ENCODE measurements at regions of chr3 and their contacts with region 1.

Region 1: GRCh38 chr3:50611464-50612233 is at the start of gene CISH:
- DNase-seq: peak; percentile 99
- ATAC-seq: peak; percentile 68
- H3K4me3 Mint-ChIP-seq: peak within 1 kb of the TSS; percentile 96
- H3K27ac Mint-ChIP-seq: peak within 1 kb of the TSS; percentile 100
- H3K4me1 Mint-ChIP-seq: peaks cover 39% of the 10 kb centered on the region
- H3K27me3 Mint-ChIP-seq: no peaks in the 10 kb centered on the region
- total RNA-seq, gene CISH: 265 to 269 TPM

Region 2: DNA sequence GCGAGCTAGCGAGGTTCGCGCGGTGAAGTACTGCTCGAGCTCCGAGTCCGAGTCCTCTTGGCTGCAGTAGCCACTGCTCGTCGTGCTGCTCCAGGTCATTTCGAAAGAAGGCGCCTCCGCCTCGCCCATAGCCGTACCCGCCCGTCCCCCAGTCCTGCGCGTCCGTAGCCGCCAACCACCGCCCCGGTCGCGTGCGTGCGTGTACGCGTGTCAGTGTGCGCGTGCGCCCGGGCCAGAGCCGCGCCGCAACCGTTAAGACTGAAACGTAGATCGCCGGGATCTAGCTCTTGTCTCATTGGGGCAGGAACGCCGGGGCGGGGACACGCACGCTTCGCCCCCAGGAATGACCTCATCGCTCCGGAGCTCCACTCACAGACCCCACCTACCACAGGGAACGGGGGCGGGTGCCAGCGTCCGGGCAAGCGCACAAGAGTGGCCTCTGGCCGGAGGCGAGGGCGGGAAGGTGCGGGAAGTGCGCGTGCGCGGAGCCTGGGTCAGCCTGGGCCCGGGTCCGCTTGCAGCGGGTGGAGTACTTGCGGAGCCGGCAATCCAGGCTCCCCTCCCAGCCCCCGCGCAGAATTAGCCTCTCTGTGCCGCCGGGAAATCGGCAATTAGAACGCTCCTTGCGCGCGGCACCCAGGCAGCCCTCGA is 274.3 kb before region 1 on chr3:
- CTCF ChIA-PET with region 1: interaction called, 4 read pairs
- POLR2A ChIA-PET with region 1: interaction called, 4 read pairs
- intact Hi-C with region 1: loop called (anchors 1 to 5 kb)
- DNase-seq: peak; percentile 99
- ATAC-seq: peak; percentile 82
- H3K4me3 Mint-ChIP-seq: peak overlapping the region; percentile 83
- H3K27ac Mint-ChIP-seq: peak overlapping the region; percentile 91
- H3K4me1 Mint-ChIP-seq: peaks cover 50% of the 10 kb centered on the region
- H3K27me3 Mint-ChIP-seq: no peaks in the 10 kb centered on the region

Region 3: DNA sequence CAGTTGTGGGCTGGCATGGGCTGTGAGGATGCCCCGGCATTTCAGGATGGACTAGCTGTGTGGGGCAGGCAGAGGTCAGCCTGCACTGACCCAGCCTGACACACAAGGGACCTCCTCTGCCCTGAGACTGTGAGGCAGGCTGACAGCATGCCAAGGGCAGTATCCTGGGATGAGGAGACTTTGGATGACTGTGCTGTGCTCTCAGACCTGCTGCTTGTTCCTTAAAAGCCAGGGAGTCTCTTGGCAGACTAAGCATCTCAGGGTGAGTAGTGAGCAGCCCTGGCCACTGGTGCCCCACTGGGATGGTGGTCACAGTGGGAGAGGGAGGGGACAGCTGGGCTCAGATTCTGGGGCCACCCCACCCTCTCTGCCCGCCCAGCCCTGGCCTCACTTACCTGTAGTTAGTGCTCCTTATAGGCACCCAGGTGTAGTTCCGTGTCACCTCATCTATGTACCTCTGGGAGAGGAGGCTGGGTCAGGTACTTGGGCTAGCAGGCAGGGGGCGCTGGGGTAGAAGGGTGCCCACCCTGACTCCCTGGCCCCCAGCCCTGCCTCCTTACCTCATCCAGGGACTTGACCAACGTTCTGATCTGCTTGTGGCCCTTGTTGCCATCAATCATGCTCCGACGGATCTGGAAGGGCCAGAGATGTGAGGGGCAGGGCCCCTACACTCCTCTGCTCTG is 236.3 kb before region 1 on chr3:
- CTCF ChIA-PET with region 1: no interaction called
- POLR2A ChIA-PET with region 1: no interaction called
- intact Hi-C with region 1: no loop called
- DNase-seq: no peak
- ATAC-seq: peak; percentile 26
- H3K4me3 Mint-ChIP-seq: no peak overlapping the region
- H3K27ac Mint-ChIP-seq: no peak overlapping the region
- H3K4me1 Mint-ChIP-seq: peaks cover 8% of the 10 kb centered on the region
- H3K27me3 Mint-ChIP-seq: no peaks in the 10 kb centered on the region

Region 4: DNA sequence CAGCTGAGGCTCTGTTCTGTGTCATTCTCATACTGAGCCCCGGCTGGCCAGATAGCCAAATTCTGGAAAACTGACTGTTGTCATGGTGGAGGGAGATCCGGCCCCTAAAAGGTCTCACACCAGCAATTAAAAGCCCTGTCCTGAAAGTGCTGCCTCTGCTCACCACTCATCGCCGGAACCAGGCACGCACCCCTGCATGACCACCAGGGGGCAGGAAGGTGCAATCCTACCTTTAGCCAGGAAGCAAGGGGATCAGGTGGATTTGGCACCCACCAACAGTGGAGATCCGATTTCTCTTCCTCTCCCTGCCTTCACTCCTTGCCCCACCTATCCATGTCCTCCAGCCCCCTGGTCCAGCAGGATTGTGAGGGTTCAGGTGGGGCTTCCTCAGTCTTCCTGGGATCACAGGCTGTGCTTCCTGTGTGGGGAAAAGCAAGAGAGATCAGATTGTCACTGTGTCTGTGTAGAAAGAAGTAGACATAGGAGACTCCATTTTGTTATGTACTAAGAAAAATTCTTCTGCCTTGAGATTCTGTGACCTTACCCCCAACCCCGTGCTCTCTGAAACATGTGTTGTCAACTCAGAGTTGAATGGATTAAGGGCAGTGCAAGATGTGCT is 92.1 kb before region 1 on chr3:
- CTCF ChIA-PET with region 1: interaction called, 5 read pairs
- POLR2A ChIA-PET with region 1: no interaction called
- intact Hi-C with region 1: loop called (anchors 1 kb)
- DNase-seq: peak; percentile 88
- ATAC-seq: peak; percentile 95
- H3K4me3 Mint-ChIP-seq: no peak overlapping the region
- H3K27ac Mint-ChIP-seq: no peak overlapping the region
- H3K4me1 Mint-ChIP-seq: peaks cover 4% of the 10 kb centered on the region
- H3K27me3 Mint-ChIP-seq: peaks cover 4% of the 10 kb centered on the region

Region 5: GRCh38 chr3:50600841-50601591 is 10.6 kb before region 1 on chr3:
- CTCF ChIA-PET with region 1: interaction called, 92 read pairs
- POLR2A ChIA-PET with region 1: interaction called, 180 read pairs
- intact Hi-C with region 1: loop called (anchors 1 kb)
- DNase-seq: peak; percentile 96
- ATAC-seq: peak; percentile 55
- H3K4me3 Mint-ChIP-seq: peak overlapping the region; percentile 96
- H3K27ac Mint-ChIP-seq: peak overlapping the region; percentile 100
- H3K4me1 Mint-ChIP-seq: peaks cover 83% of the 10 kb centered on the region
- H3K27me3 Mint-ChIP-seq: no peaks in the 10 kb centered on the region

Region 6: GRCh38 chr3:50885070-50885850 is 273.6 kb after region 1 on chr3:
- CTCF ChIA-PET with region 1: no interaction called
- POLR2A ChIA-PET with region 1: no interaction called
- intact Hi-C with region 1: loop called in 1 of 2 experiments (anchors 5 kb)
- DNase-seq: no peak
- ATAC-seq: no peak
- H3K4me3 Mint-ChIP-seq: no peak overlapping the region
- H3K27ac Mint-ChIP-seq: no peak overlapping the region
- H3K4me1 Mint-ChIP-seq: no peaks in the 10 kb centered on the region
- H3K27me3 Mint-ChIP-seq: peaks cover 6% of the 10 kb centered on the region

Region 7: GRCh38 chr3:51391075-51391567 is 779.5 kb after region 1 on chr3 and contains the start of gene RBM15B:
- CTCF ChIA-PET with region 1: interaction called, 10 read pairs
- POLR2A ChIA-PET with region 1: no interaction called
- intact Hi-C with region 1: loop called in 1 of 2 experiments (anchors 1 kb)
- DNase-seq: peak; percentile 99
- ATAC-seq: peak; percentile 96
- H3K4me3 Mint-ChIP-seq: peak within 1 kb of the TSS; percentile 81
- H3K27ac Mint-ChIP-seq: peak within 1 kb of the TSS; percentile 89
- H3K4me1 Mint-ChIP-seq: peaks cover 70% of the 10 kb centered on the region
- H3K27me3 Mint-ChIP-seq: no peaks in the 10 kb centered on the region
- total RNA-seq, gene RBM15B: 20.9 to 21.5 TPM

Region 8: GRCh38 chr3:52278510-52279069 is 1666.9 kb after region 1 on chr3 and contains the start of gene WDR82:
- CTCF ChIA-PET with region 1: no interaction called
- POLR2A ChIA-PET with region 1: interaction called, 10 read pairs
- intact Hi-C with region 1: loop called in 1 of 2 experiments (anchors 10 kb)
- DNase-seq: peak; percentile 100
- ATAC-seq: peak; percentile 78
- H3K4me3 Mint-ChIP-seq: peak within 1 kb of the TSS; percentile 99
- H3K27ac Mint-ChIP-seq: peak within 1 kb of the TSS; percentile 99
- H3K4me1 Mint-ChIP-seq: peaks cover 56% of the 10 kb centered on the region
- H3K27me3 Mint-ChIP-seq: no peaks in the 10 kb centered on the region
- total RNA-seq, gene WDR82: 95.2 to 113 TPM

Measured in activated CD4-positive, alpha-beta T cell treated with anti-CD3 and anti-CD28 coated beads for 36 hours (primary cell).